ENCODE measurements at regions of chr14 and their contacts with region 1.

Region 1: DNA sequence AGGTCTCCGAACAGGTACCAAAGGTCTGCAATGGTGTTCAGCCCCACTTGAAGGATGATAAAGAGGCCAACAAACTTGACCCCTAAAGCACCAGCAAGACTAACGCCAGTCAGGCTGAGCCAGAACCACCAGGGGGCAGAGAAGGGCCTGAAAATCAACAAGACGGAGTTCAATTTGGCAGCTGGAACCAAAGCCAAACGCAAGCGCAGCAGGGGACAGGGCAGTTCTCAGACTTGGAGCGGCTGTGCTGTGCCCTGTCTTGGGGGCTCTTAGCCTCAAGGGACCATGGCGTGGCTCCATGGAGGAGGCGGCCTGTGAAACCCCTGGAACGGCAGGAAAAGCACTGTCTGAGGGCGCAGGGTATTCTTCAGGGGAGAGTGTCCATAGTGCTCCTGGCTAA is 19.6 kb downstream of the POMT2 start:
- DNase-seq: peak; percentile 68
- ATAC-seq: peak; percentile 69
- H3K4me3 ChIP-seq: no peak overlapping the region
- H3K27ac ChIP-seq: no peak overlapping the region
- H3K4me1 ChIP-seq: peaks cover 19 to 22% of the 10 kb centered on the region in 2 experiments
- H3K27me3 ChIP-seq: no peaks in the 10 kb centered on the region
- CTCF ChIP-seq: peak; percentile 87 to 92 (median 89)
- POLR2A ChIP-seq: no peak
- RAD21 ChIP-seq: peak; percentile 82

Region 2: GRCh38 chr14:77014004-77014604 is 287.0 kb before region 1 on chr14:
- CTCF ChIA-PET with region 1: no interaction called
- POLR2A ChIA-PET with region 1: no interaction called
- RAD21 ChIA-PET with region 1: no interaction called
- intact Hi-C with region 1: no loop called
- DNase-seq: no peak
- ATAC-seq: no peak
- H3K4me3 ChIP-seq: no peak overlapping the region
- H3K27ac ChIP-seq: no peak overlapping the region
- H3K4me1 ChIP-seq: peaks cover 7 to 9% of the 10 kb centered on the region in 2 experiments; a peak in 2 of 4 replicates
- H3K27me3 ChIP-seq: no peaks in the 10 kb centered on the region
- CTCF ChIP-seq: no peak
- POLR2A ChIP-seq: no peak
- RAD21 ChIP-seq: no peak

Region 3: GRCh38 chr14:77076113-77076631 is 224.9 kb before region 1 on chr14:
- CTCF ChIA-PET with region 1: no interaction called
- POLR2A ChIA-PET with region 1: no interaction called
- RAD21 ChIA-PET with region 1: no interaction called
- intact Hi-C with region 1: no loop called
- DNase-seq: no peak
- ATAC-seq: no peak
- H3K4me3 ChIP-seq: no peak overlapping the region
- H3K27ac ChIP-seq: no peak overlapping the region
- H3K4me1 ChIP-seq: peaks cover 19 to 31% of the 10 kb centered on the region in 2 experiments
- H3K27me3 ChIP-seq: no peaks in the 10 kb centered on the region
- CTCF ChIP-seq: no peak
- POLR2A ChIP-seq: no peak
- RAD21 ChIP-seq: no peak

Region 4: DNA sequence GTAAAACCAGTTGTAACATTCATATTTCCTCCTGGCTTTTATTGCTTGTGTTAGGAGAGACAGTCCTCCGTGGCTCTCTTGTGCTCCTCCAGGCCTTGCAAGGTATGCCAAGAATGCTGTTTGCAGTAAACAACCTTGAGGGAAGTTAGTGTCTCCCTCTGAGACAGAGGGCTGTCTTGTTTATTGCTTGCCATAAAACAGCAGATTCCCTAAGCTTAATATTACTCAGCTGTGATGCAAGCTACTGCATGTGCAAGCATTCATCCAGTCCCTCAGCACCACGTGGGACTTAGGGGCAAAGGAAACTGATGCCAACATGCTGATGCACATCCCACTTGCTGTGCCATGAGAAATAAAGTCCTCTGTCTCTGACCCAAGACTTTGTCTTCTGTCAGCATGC is 12.9 kb after region 1 on chr14:
- CTCF ChIA-PET with region 1: interaction called, 89 read pairs
- POLR2A ChIA-PET with region 1: interaction called, 4 read pairs
- RAD21 ChIA-PET with region 1: interaction called, 6 read pairs
- intact Hi-C with region 1: loop called (anchors 2 kb)
- DNase-seq: no peak
- ATAC-seq: no peak
- H3K4me3 ChIP-seq: no peak overlapping the region
- H3K27ac ChIP-seq: no peak overlapping the region
- H3K4me1 ChIP-seq: peaks cover 0 to 5% of the 10 kb centered on the region in 2 experiments; a peak in 1 of 4 replicates
- H3K27me3 ChIP-seq: no peaks in the 10 kb centered on the region
- CTCF ChIP-seq: no peak
- POLR2A ChIP-seq: no peak
- RAD21 ChIP-seq: no peak

Measured in HCT116 (cell line).